A549 (cell line): ENCODE measurements at regions of chrX and their contacts with region 1.

Region 1: GRCh38 chrX:49155900-49156837 is 6.4 kb upstream of the MAGIX start:
- DNase-seq: peak; percentile 81 to 95
- ATAC-seq: peak; percentile 93 to 95
- H3K4me3 ChIP-seq: peak overlapping the region; percentile 63
- H3K27ac ChIP-seq: peak overlapping the region; percentile 97 to 99
- H3K4me1 ChIP-seq: peaks cover 8% of the 10 kb centered on the region; the same call in 1 of the 3 replicates
- CTCF ChIP-seq: peak; percentile 78
- EP300 ChIP-seq: no peak
- POLR2A ChIP-seq: no peak; the same call in none of the 2 replicates
- RAD21 ChIP-seq: peak; percentile 20 to 47; a peak in 3 of 5 replicates

Region 2: DNA sequence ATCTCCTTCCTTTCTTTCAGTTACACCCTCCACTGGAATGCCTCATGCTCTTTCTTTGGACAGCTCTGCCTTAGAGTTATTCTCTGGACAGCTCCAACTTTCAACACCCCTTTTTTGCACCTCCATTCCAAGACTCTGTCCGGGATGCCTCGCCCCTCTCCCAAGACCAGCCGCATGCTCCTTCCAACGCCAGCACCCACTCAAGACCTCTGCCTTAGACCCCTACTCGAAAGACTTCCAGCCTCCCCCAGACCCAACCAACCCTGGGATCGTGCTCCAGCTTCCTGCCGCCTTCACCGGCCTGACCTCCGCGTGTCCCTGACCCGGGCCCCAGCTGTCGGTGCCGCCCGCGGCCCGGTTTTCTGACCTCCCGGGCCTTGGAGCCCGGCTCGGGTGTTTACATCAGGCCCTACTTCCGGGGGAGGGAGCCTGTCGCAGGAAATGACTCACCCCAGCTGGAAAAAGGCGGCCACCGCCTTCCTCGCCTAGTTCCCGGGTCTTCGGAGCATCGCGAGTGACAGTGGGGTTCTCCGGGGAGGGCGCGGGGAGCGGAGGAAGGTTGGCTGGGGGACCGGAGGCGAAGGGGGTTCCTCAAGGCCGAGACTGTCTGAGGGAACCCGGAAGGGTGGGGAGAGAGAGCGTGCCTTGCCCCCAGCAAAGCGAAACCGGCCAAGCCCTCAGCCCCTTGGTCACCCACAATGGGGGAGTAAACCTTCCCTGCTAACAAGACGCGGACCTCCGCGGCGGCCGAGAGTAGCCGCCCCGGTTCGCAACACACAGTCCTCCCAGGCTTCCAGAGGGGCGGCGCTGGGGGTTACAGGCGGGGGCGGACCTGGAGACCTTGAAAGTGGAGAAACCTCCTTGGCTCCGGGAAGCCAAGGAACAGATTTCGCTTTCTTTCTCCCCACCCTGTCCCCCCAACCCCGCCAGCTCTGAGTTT is 76.4 kb before region 1 on chrX and contains the start of gene WDR45:
- CTCF ChIA-PET with region 1: interaction called, 4 read pairs
- POLR2A ChIA-PET with region 1: interaction called, 11 read pairs
- DNase-seq: peak; percentile 78 to 89
- ATAC-seq: peak; percentile 87 to 90
- H3K4me3 ChIP-seq: peak within 1 kb of the TSS; percentile 89
- H3K27ac ChIP-seq: peak within 1 kb of the TSS; percentile 86 to 98
- H3K4me1 ChIP-seq: 0 out of 3 replicates have a peak, but pooled peaks cover 2% of the 10 kb centered on the region
- CTCF ChIP-seq: no peak
- EP300 ChIP-seq: no peak
- POLR2A ChIP-seq: peak; percentile 44; the same call in 1 of the 2 replicates
- RAD21 ChIP-seq: no peak
- polyA plus RNA-seq, gene WDR45: 55.5 and 80.1 TPM in 2 replicates

Region 3: DNA sequence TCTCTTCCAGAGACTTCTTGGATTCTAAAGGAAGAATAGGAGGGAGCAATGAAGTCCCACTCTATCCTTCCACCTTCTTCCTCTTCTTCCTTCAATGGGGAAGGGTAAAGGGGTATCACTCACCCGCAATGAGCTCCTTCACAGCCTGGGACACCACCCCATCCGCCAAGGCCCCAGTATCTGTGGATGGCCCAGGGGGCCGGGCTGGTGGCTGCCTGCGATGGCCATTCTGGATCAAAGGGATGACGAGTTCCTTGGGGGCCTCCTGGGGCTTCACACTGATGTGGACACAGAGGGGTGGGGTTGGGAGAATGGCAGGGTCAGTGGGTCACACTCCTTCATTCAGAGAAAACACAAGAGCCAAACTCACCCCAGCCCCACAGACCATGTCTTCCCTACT is 33.7 kb before region 1 on chrX:
- CTCF ChIA-PET with region 1: interaction called, 11 read pairs
- POLR2A ChIA-PET with region 1: no interaction called
- DNase-seq: no peak
- ATAC-seq: no peak
- H3K4me3 ChIP-seq: peak overlapping the region; percentile 95
- H3K27ac ChIP-seq: peak overlapping the region in 1 of 2 experiments; percentile 92; a peak in 3 of 6 replicates
- H3K4me1 ChIP-seq: peaks cover 6% of the 10 kb centered on the region; the same call in 1 of the 3 replicates
- CTCF ChIP-seq: no peak
- EP300 ChIP-seq: no peak
- POLR2A ChIP-seq: no peak
- RAD21 ChIP-seq: no peak

Region 4: DNA sequence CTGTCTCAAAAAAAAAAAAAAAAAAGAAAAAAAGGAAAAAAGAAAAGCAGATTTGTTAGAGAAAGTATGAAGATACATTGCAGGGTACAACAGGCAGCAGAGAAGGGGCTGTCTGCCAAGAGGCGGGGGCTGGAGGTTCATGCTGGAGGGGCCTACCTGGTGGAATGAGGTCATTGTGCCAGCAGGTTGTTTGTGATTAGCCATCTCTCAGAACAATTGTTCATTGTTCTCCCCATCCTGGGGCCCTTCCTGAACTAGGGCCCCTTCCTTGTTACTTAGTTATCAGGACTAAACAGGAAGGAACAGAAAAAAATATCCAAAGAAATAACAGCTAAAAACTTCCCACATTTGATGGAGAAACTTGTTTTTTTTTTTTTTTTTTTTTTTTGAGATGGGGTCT is 18.7 kb before region 1 on chrX:
- CTCF ChIA-PET with region 1: interaction called, 54 read pairs
- POLR2A ChIA-PET with region 1: interaction called, 7 read pairs
- DNase-seq: no peak
- ATAC-seq: no peak
- H3K4me3 ChIP-seq: no peak overlapping the region
- H3K27ac ChIP-seq: no peak overlapping the region
- H3K4me1 ChIP-seq: peaks cover 16% of the 10 kb centered on the region
- CTCF ChIP-seq: no peak
- EP300 ChIP-seq: no peak
- POLR2A ChIP-seq: no peak
- RAD21 ChIP-seq: no peak

Region 5: DNA sequence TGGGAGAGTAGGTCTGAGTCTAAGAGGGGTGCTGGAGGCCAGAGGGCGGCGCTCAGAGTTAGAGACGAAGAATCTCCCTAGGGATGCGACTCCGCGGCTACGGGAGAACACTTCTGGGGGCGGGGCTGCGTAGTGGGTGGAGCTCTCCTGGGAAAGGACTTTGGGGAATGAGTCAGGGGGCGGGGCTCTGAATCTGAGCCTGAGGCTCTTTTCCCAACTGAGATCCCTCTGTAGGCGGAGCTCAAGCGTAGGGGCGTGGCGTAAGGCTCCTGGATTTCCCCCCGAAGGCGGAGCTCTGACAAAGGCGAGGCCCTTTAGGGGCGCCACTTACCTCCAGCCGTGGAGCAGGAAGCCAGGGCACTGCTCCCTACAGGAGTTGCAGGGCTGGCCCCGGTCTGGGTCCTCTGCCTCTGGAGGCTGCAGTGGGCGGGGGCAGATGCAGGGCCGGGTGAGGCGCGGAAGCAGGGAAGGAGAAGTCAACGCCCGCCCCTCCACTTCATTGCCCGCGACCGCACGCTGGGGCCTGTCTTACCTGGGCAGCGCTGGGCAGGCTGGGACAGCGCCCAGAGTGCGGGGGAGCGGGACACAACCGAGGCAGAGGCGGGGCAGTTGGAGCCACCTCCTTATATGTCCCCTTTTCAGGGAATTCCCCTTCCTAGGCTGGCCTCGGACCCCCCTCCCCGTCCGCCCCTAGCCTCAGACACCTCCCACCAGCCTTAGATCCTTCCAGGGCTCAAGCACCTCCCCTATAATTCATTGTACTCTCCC is 28.3 kb after region 1 on chrX:
- CTCF ChIA-PET with region 1: interaction called, 8 read pairs
- POLR2A ChIA-PET with region 1: interaction called, 11 read pairs
- DNase-seq: peak; percentile 69 to 95
- ATAC-seq: peak; percentile 71 to 87
- H3K4me3 ChIP-seq: peak overlapping the region; percentile 63
- H3K27ac ChIP-seq: peak overlapping the region; percentile 84 to 100
- H3K4me1 ChIP-seq: peaks cover 26% of the 10 kb centered on the region
- CTCF ChIP-seq: no peak
- EP300 ChIP-seq: no peak
- POLR2A ChIP-seq: peak; percentile 62
- RAD21 ChIP-seq: 0 out of 5 replicates have a peak, but pooled peaks of 1 of the 2 experiments have one; percentile 15

Region 6: DNA sequence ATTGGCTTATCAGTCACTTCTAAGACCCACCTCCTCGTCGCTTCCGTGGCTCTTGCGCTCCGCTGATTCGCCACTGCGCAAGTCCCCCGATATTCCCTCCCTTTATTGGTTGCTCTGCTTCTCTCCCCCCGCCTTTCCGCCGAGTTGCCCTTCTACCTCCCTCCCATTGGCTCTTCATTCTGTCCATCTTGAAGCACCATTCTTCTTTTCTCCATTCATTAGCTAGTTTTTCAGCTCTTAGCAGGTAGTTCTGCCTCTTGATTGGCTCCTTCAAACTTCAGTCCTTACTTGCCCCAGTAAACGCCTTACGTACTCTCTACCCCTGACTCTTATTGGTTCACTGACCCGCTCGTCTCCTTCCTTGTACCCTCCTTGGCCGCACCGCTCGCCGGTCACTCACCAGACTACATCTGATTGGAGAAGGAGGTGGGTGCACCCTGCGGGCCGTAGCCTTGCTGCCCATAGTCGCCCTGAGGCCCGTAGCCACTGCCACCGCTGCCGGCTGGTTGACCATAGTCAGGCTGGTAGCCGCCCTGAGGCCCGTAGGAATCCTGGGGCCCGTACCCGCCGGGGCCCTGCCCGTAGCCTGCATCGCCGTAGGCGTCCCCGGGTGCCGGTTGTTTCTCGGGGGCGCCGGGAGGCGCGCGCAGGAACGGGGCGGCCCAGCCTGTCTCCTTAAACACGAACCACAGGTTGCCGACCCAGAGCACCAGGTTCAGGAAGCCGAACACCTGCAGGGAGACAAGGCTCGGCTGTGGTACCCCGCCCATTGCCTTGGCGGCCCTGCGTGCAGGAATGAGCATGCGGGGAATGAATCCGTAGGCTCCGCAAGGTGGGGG is 35.1 kb after region 1 on chrX:
- CTCF ChIA-PET with region 1: interaction called, 5 read pairs
- POLR2A ChIA-PET with region 1: interaction called, 15 read pairs
- DNase-seq: peak; percentile 95 to 100
- ATAC-seq: peak; percentile 91 to 95
- H3K4me3 ChIP-seq: peak overlapping the region; percentile 76
- H3K27ac ChIP-seq: peak overlapping the region; percentile 90 to 98
- H3K4me1 ChIP-seq: peaks cover 24% of the 10 kb centered on the region; the same call in 2 of the 3 replicates
- CTCF ChIP-seq: no peak
- EP300 ChIP-seq: no peak
- POLR2A ChIP-seq: peak; percentile 95
- RAD21 ChIP-seq: no peak